Panc1 (cell line): ENCODE measurements at regions of chr1 and their contacts with region 1.

Region 1: GRCh38 chr1:60906039-60906438 is 176.3 kb upstream of the NFIA start:
- DNase-seq: no peak
- ATAC-seq: no peak
- H3K4me3 ChIP-seq: no peak overlapping the region
- H3K27ac ChIP-seq: no peak overlapping the region
- H3K4me1 ChIP-seq: no peaks in the 10 kb centered on the region
- H3K27me3 ChIP-seq: no peaks in the 10 kb centered on the region
- CTCF ChIP-seq: no peak

Region 2: GRCh38 chr1:60746278-60746791 is 159.7 kb before region 1 on chr1:
- CTCF ChIA-PET with region 1: no interaction called
- POLR2A ChIA-PET with region 1: no interaction called
- in situ Hi-C with region 1: no loop called
- intact Hi-C with region 1: no loop called
- DNase-seq: no peak
- ATAC-seq: no peak
- H3K4me3 ChIP-seq: no peak overlapping the region
- H3K27ac ChIP-seq: no peak overlapping the region
- H3K4me1 ChIP-seq: no peaks in the 10 kb centered on the region
- H3K27me3 ChIP-seq: no peaks in the 10 kb centered on the region
- CTCF ChIP-seq: no peak

Region 3: DNA sequence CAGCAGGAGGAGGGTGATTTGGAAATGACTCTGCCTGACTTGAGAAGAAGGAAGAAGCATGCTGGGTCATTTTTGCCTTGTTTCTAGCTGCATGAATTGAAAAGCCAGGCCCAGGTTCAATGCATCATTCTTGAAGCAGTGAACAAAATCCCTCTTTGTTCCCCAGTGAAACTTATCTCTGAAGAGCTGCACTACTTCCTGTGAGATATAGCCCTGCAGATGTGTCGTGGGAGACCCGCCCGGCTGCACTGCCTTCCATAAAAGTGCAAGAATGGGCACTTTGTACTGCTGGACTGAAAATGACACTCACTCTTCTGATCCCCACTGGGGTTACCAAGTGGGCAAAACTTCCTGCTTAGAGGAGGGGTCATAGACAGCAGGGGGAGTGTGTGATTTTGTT is 72.9 kb before region 1 on chr1:
- CTCF ChIA-PET with region 1: no interaction called
- POLR2A ChIA-PET with region 1: no interaction called
- in situ Hi-C with region 1: no loop called
- intact Hi-C with region 1: no loop called
- DNase-seq: no peak
- ATAC-seq: no peak
- H3K4me3 ChIP-seq: no peak overlapping the region
- H3K27ac ChIP-seq: no peak overlapping the region
- H3K4me1 ChIP-seq: no peaks in the 10 kb centered on the region
- H3K27me3 ChIP-seq: peaks cover 14% of the 10 kb centered on the region
- CTCF ChIP-seq: no peak

Region 4: DNA sequence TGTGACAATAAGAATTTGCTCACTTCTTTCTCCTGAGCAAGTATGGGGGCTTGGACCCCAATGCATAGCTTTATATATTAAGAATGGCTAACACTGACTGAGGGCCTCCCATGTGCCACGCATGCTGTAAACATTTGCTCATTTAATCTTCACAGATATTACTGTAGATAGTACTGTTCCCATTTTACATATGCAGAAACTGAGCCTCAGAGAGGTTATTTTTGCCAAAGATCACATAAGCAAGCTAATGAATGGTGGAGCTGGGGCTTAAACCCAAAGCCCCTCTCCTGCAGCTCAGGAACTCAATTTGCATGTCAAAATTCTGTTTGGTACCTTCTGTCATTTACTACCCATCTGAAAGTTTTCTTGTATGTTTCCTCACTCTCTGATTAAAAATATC is 12.8 kb after region 1 on chr1:
- CTCF ChIA-PET with region 1: no interaction called
- POLR2A ChIA-PET with region 1: interaction called, 10 read pairs
- in situ Hi-C with region 1: no loop called
- intact Hi-C with region 1: no loop called
- DNase-seq: no peak
- ATAC-seq: no peak
- H3K4me3 ChIP-seq: no peak overlapping the region
- H3K27ac ChIP-seq: no peak overlapping the region
- H3K4me1 ChIP-seq: no peaks in the 10 kb centered on the region
- H3K27me3 ChIP-seq: no peaks in the 10 kb centered on the region
- CTCF ChIP-seq: no peak